ENCODE measurements at regions of chr11 and their contacts with region 1.

Region 1: GRCh38 chr11:45518141-45518832 is 147.1 kb downstream of the CHST1 start:
- DNase-seq: no peak
- H3K4me3 ChIP-seq: no peak overlapping the region
- H3K27ac ChIP-seq: no peak overlapping the region
- H3K4me1 ChIP-seq: no peaks in the 10 kb centered on the region
- H3K27me3 ChIP-seq: no peaks in the 10 kb centered on the region
- CTCF ChIP-seq: no peak

Region 2: GRCh38 chr11:45543808-45544422 is 25.6 kb after region 1 on chr11:
- CTCF ChIA-PET with region 1: no interaction called
- POLR2A ChIA-PET with region 1: no interaction called
- intact Hi-C with region 1: no loop called
- DNase-seq: peak; percentile 63
- H3K4me3 ChIP-seq: no peak overlapping the region
- H3K27ac ChIP-seq: no peak overlapping the region
- H3K4me1 ChIP-seq: no peaks in the 10 kb centered on the region
- H3K27me3 ChIP-seq: peaks cover 36% of the 10 kb centered on the region
- CTCF ChIP-seq: no peak

Region 3: DNA sequence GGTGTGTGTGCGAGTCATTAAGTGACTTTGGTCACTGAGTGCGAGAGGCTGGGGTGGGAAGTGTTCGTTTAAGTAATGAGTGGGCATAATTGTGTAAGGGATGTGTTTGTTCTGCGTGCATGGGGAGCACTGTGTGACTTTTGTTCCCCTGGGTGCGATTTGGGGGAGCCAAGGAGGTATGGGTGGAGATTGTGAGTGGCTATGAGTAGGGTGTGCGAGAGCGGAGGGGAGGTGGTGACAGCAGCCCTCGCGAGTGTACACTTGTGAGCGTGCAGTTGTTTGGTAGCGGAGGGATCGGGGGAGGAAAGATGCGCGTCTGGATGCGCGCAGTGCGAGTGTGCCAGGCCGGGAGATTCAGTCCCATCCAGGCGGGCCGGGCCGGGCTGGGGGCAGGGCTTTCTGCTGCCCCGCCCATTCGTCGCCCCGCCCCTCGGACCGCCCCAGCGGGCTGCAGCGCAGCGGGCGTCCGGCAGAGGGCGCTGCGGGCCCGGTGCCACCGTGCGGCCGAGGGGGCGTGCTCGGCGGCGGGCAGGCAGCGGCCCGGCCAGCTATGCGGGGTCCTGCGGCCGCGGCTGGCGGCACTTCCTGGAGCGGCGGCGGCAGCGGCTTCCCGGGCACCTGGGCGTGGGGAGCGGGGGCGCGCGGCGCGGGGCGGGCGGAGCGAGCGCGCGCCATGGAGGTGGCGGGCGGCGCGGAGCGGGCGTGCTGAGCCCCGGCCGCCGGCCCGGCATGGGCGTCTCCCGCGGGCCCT is 828.8 kb after region 1 on chr11 and contains the start of gene DGKZ:
- CTCF ChIA-PET with region 1: no interaction called
- POLR2A ChIA-PET with region 1: no interaction called
- intact Hi-C with region 1: loop called (anchors 10 kb)
- DNase-seq: peak; percentile 97
- H3K4me3 ChIP-seq: peak within 1 kb of the TSS; percentile 71
- H3K27ac ChIP-seq: peak within 1 kb of the TSS; percentile 76
- H3K4me1 ChIP-seq: peaks cover 50% of the 10 kb centered on the region
- H3K27me3 ChIP-seq: no peaks in the 10 kb centered on the region
- CTCF ChIP-seq: peak; percentile 74
- total RNA-seq, gene DGKZ: 139 and 145 TPM in 2 replicates